ENCODE measurements at regions of chr9 and their contacts with region 1.

Region 1: DNA sequence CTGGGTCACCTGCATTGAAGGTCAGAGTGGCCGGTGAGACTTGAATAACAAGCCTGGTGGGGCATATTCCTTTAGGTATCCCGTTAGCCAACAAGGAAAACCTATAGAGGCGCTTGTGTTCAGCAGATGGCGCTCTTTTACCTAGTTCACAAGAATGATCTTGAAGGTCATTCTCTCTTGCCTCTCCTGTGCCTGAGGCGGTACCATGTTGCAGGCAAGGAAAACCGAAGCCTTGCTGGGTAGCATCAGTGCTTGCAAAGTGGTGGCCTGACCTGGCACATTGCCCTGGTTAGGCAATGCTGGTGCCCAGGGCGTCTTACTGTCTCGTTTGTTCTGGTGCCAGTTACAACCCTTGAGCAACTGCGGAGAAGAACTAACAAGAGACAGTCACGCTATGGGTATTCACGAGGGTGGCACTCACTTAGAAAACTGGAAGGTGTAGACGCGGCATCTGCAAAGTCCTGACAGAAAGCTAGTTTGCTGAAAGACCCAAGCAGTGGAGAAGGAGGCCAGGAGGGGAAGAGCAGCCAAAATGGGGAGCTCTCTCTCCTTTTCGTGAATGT is 56.7 kb downstream of the AOPEP start:
- DNase-seq: peak; percentile 84

Region 2: GRCh38 chr9:94870793-94871558 is 87.8 kb after region 1 on chr9:
- intact Hi-C with region 1: loop called (anchors 2 kb)
- DNase-seq: peak; percentile 87

Region 3: GRCh38 chr9:94952565-94953373 is 169.6 kb after region 1 on chr9:
- intact Hi-C with region 1: loop called (anchors 2 kb)
- DNase-seq: no peak

Region 4: GRCh38 chr9:95025213-95026147 is 242.3 kb after region 1 on chr9:
- intact Hi-C with region 1: loop called (anchors 5 kb)
- DNase-seq: no peak

Region 5: GRCh38 chr9:95127249-95128176 is 344.3 kb after region 1 on chr9:
- intact Hi-C with region 1: loop called (anchors 2 kb)
- DNase-seq: peak; percentile 91

Measured in cardiac septum (tissue), 1 donor.